HAP-1 (cell line): ENCODE measurements at regions of chr16 and their contacts with region 1.

Region 1: DNA sequence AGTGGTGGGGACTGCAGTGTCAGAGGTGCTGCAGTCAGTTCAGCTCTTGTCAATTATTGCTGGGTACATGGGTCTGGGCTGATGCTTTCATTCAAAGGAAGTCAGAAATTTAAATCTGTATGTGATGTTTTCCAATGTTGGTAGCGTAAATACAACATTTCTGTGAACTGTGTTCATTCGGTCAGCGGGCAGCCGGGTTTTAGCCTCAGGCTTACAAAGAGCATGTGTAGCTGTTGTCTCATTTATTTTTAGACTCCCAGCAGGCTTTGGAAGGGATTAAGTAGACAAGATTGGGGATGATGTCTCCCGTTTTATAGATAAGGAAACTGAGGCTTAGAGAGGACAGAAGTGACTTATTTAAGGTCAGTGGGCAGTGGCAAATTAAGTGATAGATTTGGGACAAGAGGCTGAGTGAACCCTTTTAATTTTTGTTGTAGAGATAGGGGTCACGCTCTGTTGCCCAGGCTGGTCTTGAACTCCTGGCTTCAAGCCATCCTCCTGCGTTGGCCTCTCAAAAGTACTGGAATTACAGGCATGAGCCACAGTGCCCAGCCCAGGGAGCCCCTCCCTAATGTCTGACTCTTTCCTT is 8.1 kb downstream of the AQP8 start:
- DNase-seq: no peak
- H3K4me3 ChIP-seq: no peak overlapping the region
- H3K4me1 ChIP-seq: no peaks in the 10 kb centered on the region; the same call in 1 of the 2 replicates
- H3K27me3 ChIP-seq: no peaks in the 10 kb centered on the region

Region 2: GRCh38 chr16:25051406-25052150 is 173.2 kb before region 1 on chr16:
- in situ Hi-C with region 1: loop called (anchors 5 kb)
- DNase-seq: no peak
- H3K4me3 ChIP-seq: no peak overlapping the region
- H3K4me1 ChIP-seq: peaks cover 17% of the 10 kb centered on the region
- H3K27me3 ChIP-seq: no peaks in the 10 kb centered on the region